Endothelial cell of umbilical vein (primary cell): ENCODE measurements at regions of chr4 and their contacts with region 1.

Region 1: DNA sequence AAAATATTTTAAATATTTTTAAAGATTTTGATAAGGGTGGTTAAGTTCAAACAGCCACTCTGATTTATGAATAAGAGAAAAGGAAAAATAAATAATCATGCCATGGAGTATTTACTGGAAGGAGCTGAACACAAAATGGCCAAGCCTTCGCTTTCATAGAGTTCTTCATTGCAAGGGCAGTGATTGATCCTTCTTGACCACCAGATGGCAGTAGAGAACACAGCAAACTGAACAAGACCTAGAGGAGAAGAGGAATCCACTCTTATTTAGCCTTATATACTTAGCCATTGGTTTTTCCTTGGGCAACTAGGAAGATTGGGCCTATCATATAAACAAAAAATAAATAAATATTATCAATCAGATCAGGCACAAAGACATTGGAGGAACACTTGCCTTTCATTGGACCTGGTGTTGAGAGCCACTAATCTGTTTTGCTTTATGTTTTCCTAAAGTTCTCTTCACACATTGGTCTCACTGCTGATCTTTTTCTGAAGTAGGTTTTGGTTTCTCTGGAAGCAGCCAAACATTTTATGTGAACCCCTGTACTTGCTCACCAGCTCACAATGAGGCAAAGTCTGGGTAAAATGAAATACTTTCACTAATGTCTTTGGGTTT is 58.1 kb upstream of the PARM1 start:
- DNase-seq: peak; percentile 67
- H3K4me3 ChIP-seq: no peak overlapping the region
- H3K27ac ChIP-seq: no peak overlapping the region
- H3K4me1 ChIP-seq: peaks cover 2% of the 10 kb centered on the region
- H3K27me3 ChIP-seq: peaks cover 1 to 9% of the 10 kb centered on the region in 2 experiments
- CTCF ChIP-seq: peak; percentile 72 to 89
- POLR2A ChIP-seq: no peak

Region 2: GRCh38 chr4:74615411-74615810 is 259.4 kb before region 1 on chr4:
- CTCF ChIA-PET with region 1: no interaction called
- POLR2A ChIA-PET with region 1: no interaction called
- dilution Hi-C with region 1: no loop called
- intact Hi-C with region 1: no loop called
- DNase-seq: no peak
- H3K4me3 ChIP-seq: no peak overlapping the region
- H3K27ac ChIP-seq: no peak overlapping the region
- H3K4me1 ChIP-seq: peaks cover 38% of the 10 kb centered on the region
- H3K27me3 ChIP-seq: no peaks in the 10 kb centered on the region
- CTCF ChIP-seq: no peak
- POLR2A ChIP-seq: no peak

Region 3: DNA sequence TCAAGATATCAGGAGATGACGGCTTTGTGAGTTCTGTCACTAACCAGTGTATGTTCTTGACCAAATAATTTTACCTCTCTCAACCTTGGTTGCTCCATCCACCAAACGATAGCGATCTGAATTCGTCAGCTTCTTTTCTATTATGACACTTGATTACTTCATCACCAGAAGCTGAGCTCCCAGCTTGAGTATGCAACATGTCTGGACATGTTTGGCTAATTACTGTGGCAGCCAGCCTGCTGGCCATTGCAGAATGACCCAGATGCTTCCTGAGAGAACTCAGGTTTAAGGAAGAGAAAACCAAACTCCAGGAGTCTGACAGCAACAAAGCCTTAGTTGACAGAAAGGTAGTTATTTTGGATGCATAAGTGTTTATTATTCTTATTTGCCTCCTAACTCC is 11.6 kb after region 1 on chr4:
- CTCF ChIA-PET with region 1: interaction called, 38 read pairs
- POLR2A ChIA-PET with region 1: no interaction called
- dilution Hi-C with region 1: no loop called
- intact Hi-C with region 1: no loop called
- DNase-seq: peak; percentile 76
- H3K4me3 ChIP-seq: no peak overlapping the region
- H3K27ac ChIP-seq: no peak overlapping the region
- H3K4me1 ChIP-seq: no peaks in the 10 kb centered on the region
- H3K27me3 ChIP-seq: no peaks in the 10 kb centered on the region
- CTCF ChIP-seq: no peak
- POLR2A ChIP-seq: no peak

Region 4: DNA sequence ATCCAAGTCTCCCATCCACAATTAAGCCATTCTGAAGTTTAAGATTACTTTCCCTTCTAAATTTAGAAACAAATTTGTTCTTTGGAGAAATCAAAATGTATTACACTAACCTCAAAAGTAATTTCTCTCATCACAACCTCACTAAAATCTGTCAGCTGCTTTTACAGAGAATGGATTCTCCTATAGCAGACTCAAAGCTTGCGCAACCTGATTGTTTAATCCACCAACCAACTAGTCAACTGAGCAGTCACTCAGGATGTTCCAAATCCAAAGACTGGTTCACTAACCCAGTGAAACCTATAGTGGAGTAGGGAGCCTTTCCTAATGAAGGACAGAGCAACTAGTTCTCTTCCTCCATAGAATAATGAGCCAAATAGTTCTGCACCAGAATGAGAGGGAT is 595.0 kb after region 1 on chr4:
- CTCF ChIA-PET with region 1: interaction called, 10 read pairs
- POLR2A ChIA-PET with region 1: no interaction called
- dilution Hi-C with region 1: no loop called
- intact Hi-C with region 1: loop called (anchors 10 kb)
- DNase-seq: no peak
- H3K4me3 ChIP-seq: no peak overlapping the region
- H3K27ac ChIP-seq: no peak overlapping the region
- H3K4me1 ChIP-seq: no peaks in the 10 kb centered on the region
- H3K27me3 ChIP-seq: no peaks in the 10 kb centered on the region
- CTCF ChIP-seq: no peak
- POLR2A ChIP-seq: no peak

Region 5: DNA sequence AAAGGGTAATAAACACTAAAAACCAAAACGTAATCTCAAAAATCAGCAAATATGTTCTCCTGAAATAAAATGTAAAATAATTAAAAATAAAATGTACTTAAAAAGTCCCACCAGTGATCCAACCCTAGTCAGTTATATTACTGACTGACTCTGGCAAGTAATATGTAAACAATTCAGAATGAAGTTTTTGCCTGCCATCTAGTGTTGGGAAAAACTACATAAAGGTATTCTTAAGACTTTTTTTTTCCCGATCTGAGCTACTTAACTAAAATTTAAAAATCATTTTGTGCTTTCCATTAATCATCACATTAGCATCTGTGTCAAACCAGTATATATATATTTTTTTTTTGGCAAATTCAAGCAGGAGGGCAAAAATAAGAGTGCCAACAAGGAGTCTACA is 615.3 kb after region 1 on chr4:
- CTCF ChIA-PET with region 1: interaction called, 11 read pairs
- POLR2A ChIA-PET with region 1: no interaction called
- dilution Hi-C with region 1: no loop called
- intact Hi-C with region 1: no loop called
- DNase-seq: peak; percentile 23
- H3K4me3 ChIP-seq: no peak overlapping the region
- H3K27ac ChIP-seq: no peak overlapping the region
- H3K4me1 ChIP-seq: no peaks in the 10 kb centered on the region
- H3K27me3 ChIP-seq: no peaks in the 10 kb centered on the region
- CTCF ChIP-seq: no peak
- POLR2A ChIP-seq: no peak